ENCODE measurements at regions of chr5 and their contacts with region 1.

Region 1: DNA sequence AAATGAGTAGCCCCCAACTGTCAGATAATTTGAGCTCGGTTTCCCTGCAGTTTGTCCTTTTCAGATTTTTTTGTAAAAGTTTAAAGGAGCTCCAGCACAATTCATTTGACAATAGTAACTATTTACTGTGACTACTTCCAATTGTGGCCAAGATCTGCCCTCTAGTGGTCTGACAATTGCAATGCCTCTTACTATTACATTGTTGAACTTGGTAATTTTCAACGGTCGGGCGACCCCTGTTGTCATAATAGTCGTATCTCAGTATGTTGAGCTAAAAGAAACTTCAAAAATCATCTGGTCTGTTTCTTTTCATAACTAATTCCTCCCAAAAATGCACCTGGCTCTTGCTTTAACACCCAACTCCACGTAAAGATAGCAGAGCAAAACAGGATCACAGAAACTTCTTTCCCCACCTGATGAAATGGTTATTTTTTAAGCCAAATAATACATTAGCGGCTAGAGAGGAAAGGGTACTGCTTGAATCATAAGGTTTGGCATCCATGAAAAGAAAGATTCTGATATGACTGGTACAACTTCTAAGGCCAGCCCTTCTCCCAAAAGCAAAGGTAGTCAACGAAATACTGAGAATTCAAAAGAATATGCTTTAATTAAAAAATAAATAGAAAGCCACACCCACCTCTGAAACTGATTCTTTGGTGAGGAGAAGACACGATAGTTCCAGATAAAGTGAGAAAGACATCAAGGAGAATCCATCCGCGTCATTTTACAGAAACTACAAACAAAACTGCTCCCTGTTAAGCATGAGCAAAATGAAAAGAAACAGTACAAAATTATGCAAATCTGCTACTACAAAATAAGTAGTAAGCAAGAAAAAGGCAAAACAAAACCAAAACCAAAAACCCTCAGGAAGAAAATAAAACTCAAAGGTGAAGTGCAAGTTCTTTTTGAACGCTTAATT is 76.9 kb upstream of the HTR4 start:
- DNase-seq: peak; percentile 59
- ATAC-seq: peak; percentile 77
- H3K4me3 Mint-ChIP-seq: no peak overlapping the region
- H3K27ac Mint-ChIP-seq: no peak overlapping the region
- H3K4me1 Mint-ChIP-seq: peaks cover 18% of the 10 kb centered on the region
- H3K27me3 Mint-ChIP-seq: no peaks in the 10 kb centered on the region
- CTCF ChIP-seq: peak; percentile 64

Region 2: GRCh38 chr5:148455185-148455584 is 276.0 kb before region 1 on chr5:
- CTCF ChIA-PET with region 1: interaction called, 25 read pairs
- POLR2A ChIA-PET with region 1: no interaction called
- DNase-seq: no peak
- ATAC-seq: no peak
- H3K4me3 Mint-ChIP-seq: no peak overlapping the region
- H3K27ac Mint-ChIP-seq: no peak overlapping the region
- H3K4me1 Mint-ChIP-seq: peaks cover 27% of the 10 kb centered on the region
- H3K27me3 Mint-ChIP-seq: no peaks in the 10 kb centered on the region
- CTCF ChIP-seq: no peak

Region 3: DNA sequence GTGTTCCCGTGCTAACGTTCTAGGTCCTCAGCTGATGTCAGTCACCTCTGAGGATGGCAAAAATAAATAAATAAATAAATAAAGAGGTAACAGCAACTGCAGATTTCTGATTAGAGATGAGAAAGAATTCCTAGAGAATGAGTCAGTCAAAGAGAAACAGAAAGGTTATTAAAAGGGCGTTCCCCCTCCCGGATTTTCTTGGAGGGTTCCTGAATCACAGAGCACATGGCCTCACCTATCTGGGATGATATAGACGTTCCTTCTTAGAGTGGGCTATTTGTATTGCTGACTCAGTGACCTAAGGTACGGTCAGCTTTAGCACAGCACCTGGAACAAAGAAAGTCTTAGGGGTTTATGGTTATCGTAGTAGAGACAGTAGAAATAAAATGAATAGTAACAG is 107.5 kb before region 1 on chr5:
- CTCF ChIA-PET with region 1: interaction called, 10 read pairs
- POLR2A ChIA-PET with region 1: no interaction called
- DNase-seq: no peak
- ATAC-seq: no peak
- H3K4me3 Mint-ChIP-seq: no peak overlapping the region
- H3K27ac Mint-ChIP-seq: no peak overlapping the region
- H3K4me1 Mint-ChIP-seq: no peaks in the 10 kb centered on the region
- H3K27me3 Mint-ChIP-seq: no peaks in the 10 kb centered on the region
- CTCF ChIP-seq: no peak

Region 4: DNA sequence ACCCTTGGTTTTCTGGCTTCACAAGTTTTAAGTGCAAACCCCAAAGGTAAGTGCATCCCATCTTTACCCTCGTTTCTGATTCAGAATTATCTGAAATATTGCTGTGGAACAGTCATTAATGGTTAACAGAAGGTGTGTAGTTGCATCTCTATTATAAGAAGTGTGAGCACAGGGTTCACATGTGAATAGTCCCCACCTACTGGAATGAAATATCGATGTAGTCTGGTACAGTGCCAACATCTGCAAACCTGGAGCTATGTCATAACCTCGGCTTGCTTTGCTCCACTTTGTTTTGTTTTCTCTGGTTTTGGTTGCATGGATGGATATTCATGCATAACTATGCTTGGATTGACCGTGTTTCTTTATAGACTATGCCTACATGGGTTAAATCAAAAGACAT is 89.5 kb before region 1 on chr5:
- CTCF ChIA-PET with region 1: no interaction called
- POLR2A ChIA-PET with region 1: no interaction called
- DNase-seq: no peak
- ATAC-seq: no peak
- H3K4me3 Mint-ChIP-seq: no peak overlapping the region
- H3K27ac Mint-ChIP-seq: no peak overlapping the region
- H3K4me1 Mint-ChIP-seq: no peaks in the 10 kb centered on the region
- H3K27me3 Mint-ChIP-seq: no peaks in the 10 kb centered on the region
- CTCF ChIP-seq: no peak

Region 5: DNA sequence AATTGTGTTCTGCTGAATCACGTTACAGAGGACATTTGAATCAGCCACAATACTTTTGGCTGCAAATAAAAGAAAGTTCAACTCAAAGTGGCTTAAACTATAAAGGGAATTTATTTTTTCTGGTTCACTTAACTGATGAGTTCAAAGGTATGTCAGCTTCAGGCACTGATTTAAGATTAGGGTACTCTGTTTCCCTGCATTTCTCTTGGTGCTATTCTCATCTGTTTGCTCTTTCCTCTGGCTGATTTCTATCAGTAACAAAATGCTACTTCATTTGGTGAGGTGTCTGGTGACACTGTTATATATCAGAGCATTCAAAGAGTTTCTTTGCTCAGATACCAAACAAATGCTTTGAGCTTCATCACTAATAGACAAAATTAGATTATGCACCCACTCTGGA is 11.0 kb before region 1 on chr5:
- CTCF ChIA-PET with region 1: interaction called, 26 read pairs
- POLR2A ChIA-PET with region 1: no interaction called
- DNase-seq: no peak
- ATAC-seq: no peak; the same call in none of the 2 replicates
- H3K4me3 Mint-ChIP-seq: no peak overlapping the region
- H3K27ac Mint-ChIP-seq: no peak overlapping the region
- H3K4me1 Mint-ChIP-seq: peaks cover 28% of the 10 kb centered on the region
- H3K27me3 Mint-ChIP-seq: peaks cover 22% of the 10 kb centered on the region
- CTCF ChIP-seq: no peak

Region 6: DNA sequence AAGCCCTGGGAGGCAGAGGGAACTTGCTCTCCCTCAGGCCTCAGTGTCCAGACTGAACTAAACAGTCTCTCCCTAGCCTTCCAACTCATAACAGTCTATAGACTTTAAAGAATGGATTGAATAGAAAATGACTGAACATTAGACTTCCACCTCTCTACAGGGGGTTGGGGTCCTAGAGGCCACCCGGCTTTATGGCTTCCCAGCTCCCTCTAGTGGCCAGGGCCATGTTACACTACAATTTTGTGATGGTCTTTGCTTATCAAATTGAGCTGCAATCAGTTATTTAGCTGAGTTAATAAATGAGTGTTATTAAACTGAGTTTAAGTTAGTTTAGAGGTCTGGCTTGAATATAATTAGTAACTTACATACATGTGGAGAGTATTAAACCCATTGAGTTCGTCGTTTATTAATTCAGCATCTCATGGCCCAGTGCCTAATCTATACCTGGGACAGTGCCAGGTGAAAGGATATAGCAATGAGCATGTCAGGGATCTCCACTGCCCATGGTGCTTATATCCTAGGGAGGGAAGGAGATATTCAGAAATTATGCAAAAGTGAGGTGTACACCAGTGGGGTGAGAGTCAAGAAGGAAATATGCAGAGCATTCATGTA is 226.5 kb after region 1 on chr5:
- CTCF ChIA-PET with region 1: interaction called, 58 read pairs
- POLR2A ChIA-PET with region 1: no interaction called
- DNase-seq: peak; percentile 74
- ATAC-seq: no peak; the same call in 1 of the 2 replicates
- H3K4me3 Mint-ChIP-seq: no peak overlapping the region
- H3K27ac Mint-ChIP-seq: no peak overlapping the region
- H3K4me1 Mint-ChIP-seq: peaks cover 23% of the 10 kb centered on the region
- H3K27me3 Mint-ChIP-seq: peaks cover 8% of the 10 kb centered on the region
- CTCF ChIP-seq: peak; percentile 85

Region 7: GRCh38 chr5:149125386-149125891 is 394.2 kb after region 1 on chr5:
- CTCF ChIA-PET with region 1: interaction called, 11 read pairs
- POLR2A ChIA-PET with region 1: no interaction called
- DNase-seq: peak; percentile 65
- ATAC-seq: peak; percentile 95
- H3K4me3 Mint-ChIP-seq: no peak overlapping the region
- H3K27ac Mint-ChIP-seq: no peak overlapping the region
- H3K4me1 Mint-ChIP-seq: peaks cover 23% of the 10 kb centered on the region
- H3K27me3 Mint-ChIP-seq: no peaks in the 10 kb centered on the region
- CTCF ChIP-seq: no peak

Measured in WTC11 (cell line).